ENCODE measurements at regions of chr12 and their contacts with region 1.

Region 1: GRCh38 chr12:85920324-85920947 is 46.3 kb downstream of the NTS start:
- DNase-seq: peak; percentile 53
- H3K4me3 ChIP-seq: no peak overlapping the region
- H3K27ac ChIP-seq: no peak overlapping the region
- H3K4me1 ChIP-seq: no peaks in the 10 kb centered on the region
- H3K27me3 ChIP-seq: no peaks in the 10 kb centered on the region
- CTCF ChIP-seq: peak; percentile 20 to 27
- POLR2A ChIP-seq: no peak

Region 2: DNA sequence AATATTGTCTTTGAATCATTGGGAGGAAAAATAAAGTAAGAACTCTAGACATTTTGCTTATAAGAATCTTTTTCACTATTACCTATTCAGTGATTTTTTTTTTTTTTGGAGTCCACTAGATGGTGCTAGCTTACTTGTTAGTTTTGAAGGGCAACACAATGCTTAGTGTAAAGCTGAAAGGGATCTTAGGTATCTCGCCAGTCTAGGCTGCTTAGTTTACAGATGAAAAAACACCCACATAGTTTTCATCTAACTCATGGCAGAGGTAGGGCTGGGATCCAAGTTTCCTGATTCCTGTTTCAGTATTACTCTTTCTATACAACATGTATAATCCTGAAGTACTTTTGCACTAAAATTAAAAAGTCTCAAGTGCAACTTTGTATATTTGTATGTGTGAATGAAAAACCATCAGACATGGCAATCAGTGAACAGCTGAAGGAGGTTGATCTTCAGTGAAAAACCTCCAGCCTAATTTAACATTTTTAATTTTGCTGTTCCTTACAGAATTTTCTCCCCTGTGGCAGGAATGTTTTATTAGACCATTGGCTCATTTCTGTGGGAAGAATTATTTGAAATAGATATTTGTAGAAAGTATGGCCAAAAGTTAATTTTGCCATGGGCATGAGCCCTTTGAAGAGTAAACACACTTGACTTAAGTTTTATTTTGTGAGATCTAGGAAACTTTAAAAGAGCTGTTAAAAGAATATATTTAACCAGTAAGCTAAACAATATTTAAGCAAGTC is 843.6 kb before region 1 on chr12:
- CTCF ChIA-PET with region 1: interaction called, 25 read pairs
- POLR2A ChIA-PET with region 1: no interaction called
- dilution Hi-C with region 1: no loop called
- intact Hi-C with region 1: loop called (anchors 1 kb)
- DNase-seq: peak; percentile 87
- H3K4me3 ChIP-seq: no peak overlapping the region
- H3K27ac ChIP-seq: no peak overlapping the region
- H3K4me1 ChIP-seq: no peaks in the 10 kb centered on the region
- H3K27me3 ChIP-seq: no peaks in the 10 kb centered on the region
- CTCF ChIP-seq: peak; percentile 27 to 33
- POLR2A ChIP-seq: no peak

Region 3: GRCh38 chr12:85301051-85301450 is 619.4 kb before region 1 on chr12:
- CTCF ChIA-PET with region 1: no interaction called
- POLR2A ChIA-PET with region 1: no interaction called
- dilution Hi-C with region 1: no loop called
- intact Hi-C with region 1: loop called (anchors 10 kb)
- DNase-seq: no peak
- H3K4me3 ChIP-seq: no peak overlapping the region
- H3K27ac ChIP-seq: no peak overlapping the region
- H3K4me1 ChIP-seq: no peaks in the 10 kb centered on the region
- H3K27me3 ChIP-seq: no peaks in the 10 kb centered on the region
- CTCF ChIP-seq: no peak
- POLR2A ChIP-seq: no peak

Region 4: GRCh38 chr12:85468356-85469157 is 451.9 kb before region 1 on chr12:
- CTCF ChIA-PET with region 1: interaction called, 172 read pairs
- POLR2A ChIA-PET with region 1: no interaction called
- dilution Hi-C with region 1: no loop called
- intact Hi-C with region 1: loop called (anchors 1 kb)
- DNase-seq: peak; percentile 80
- H3K4me3 ChIP-seq: peak overlapping the region in 2 of 3 experiments; percentile 41 to 67
- H3K27ac ChIP-seq: no peak overlapping the region
- H3K4me1 ChIP-seq: no peaks in the 10 kb centered on the region
- H3K27me3 ChIP-seq: peaks cover 0 to 2% of the 10 kb centered on the region in 2 experiments
- CTCF ChIP-seq: peak; percentile 64 to 69
- POLR2A ChIP-seq: no peak

Region 5: DNA sequence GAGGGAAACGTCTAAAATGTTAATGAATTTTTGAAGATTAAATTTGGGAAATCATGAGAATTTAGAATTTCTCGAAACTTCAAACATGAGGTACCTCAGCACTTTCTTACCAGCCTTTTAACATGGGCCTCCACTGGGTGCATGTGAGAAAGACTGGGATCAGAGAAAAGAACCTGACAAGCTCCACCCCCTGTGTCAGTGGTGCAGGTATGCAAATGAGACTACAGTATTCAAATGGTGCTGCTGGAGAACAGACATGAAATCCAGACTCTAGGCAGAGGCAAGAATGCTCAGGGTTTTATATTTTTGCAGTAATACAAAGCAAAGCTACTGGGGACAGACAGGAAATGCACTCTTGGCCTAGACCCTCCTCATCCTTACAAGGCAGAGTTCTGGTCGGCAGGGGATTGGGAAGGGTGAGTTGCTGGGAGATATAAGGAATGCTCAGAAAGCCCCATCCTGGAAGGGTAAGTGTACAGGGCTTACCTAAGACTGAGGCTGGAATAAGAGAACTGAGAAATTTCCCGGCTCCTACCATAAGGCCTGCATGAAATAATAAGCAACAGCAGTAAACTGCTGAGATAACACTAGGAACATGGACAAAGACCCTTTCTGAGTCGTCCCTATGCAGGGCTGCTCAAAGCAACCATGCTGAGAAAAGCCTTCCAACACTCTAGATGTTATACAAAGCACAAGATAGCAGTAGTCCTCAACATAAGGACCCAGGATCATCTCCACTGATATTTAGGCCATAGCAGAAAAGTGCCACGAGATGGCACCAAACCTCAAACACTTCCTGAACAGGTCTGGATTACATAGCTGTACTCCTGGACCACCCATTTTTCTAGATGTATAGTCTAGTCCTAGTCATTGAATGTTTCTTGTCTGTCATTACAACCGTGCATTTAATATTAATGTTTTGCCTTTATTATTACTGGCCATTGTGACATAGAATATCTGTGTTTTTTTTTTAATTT is 345.0 kb before region 1 on chr12:
- CTCF ChIA-PET with region 1: interaction called, 21 read pairs
- POLR2A ChIA-PET with region 1: no interaction called
- dilution Hi-C with region 1: no loop called
- intact Hi-C with region 1: loop called (anchors 2 kb)
- DNase-seq: peak; percentile 80
- H3K4me3 ChIP-seq: no peak overlapping the region
- H3K27ac ChIP-seq: no peak overlapping the region
- H3K4me1 ChIP-seq: peaks cover 3% of the 10 kb centered on the region
- H3K27me3 ChIP-seq: no peaks in the 10 kb centered on the region
- CTCF ChIP-seq: peak; percentile 62 to 66
- POLR2A ChIP-seq: no peak

Region 6: DNA sequence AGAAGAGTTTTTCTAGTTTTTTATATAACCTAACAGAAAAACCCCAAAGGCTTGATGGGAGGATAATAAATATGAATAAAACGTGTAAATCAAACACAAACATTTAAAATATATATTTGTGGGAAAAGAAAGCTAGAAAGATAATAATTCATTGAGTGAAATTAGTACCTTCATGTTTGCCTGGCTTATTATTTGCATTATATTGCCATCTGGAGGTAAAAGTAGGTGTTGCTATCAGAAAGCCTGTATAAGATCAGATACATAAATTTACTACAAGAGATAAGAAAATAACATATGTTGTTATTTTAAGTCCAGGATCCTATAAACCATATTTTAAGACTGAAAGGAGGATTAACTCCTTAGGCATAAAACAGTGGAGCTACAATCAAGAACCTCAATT is 31.4 kb after region 1 on chr12:
- CTCF ChIA-PET with region 1: interaction called, 100 read pairs
- POLR2A ChIA-PET with region 1: no interaction called
- dilution Hi-C with region 1: no loop called
- intact Hi-C with region 1: loop called (anchors 1 kb)
- DNase-seq: peak; percentile 55
- H3K4me3 ChIP-seq: no peak overlapping the region
- H3K27ac ChIP-seq: no peak overlapping the region
- H3K4me1 ChIP-seq: peaks cover 4% of the 10 kb centered on the region
- H3K27me3 ChIP-seq: no peaks in the 10 kb centered on the region
- CTCF ChIP-seq: peak; percentile 17 to 25
- POLR2A ChIP-seq: no peak

Region 7: DNA sequence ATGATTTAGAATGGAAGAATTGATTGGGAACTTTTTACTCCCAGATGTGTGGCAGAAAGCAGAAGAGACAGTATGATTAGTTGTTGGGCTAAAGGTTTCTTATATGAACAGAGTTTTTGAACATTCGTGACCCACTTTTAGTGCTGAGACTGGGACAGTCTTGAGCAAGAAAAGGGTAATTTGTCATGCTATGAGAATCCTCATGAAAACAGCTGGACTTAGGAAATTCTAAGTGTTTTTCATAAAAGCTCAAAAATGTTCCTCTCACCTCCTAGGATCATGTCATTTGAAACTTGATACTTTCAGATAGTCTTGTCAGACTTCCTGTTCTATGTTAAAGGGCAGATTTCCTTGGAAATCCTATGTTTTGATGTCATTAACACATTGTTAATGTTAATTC is 249.6 kb after region 1 on chr12:
- CTCF ChIA-PET with region 1: no interaction called
- POLR2A ChIA-PET with region 1: no interaction called
- dilution Hi-C with region 1: no loop called
- intact Hi-C with region 1: no loop called
- DNase-seq: no peak
- H3K4me3 ChIP-seq: no peak overlapping the region
- H3K27ac ChIP-seq: no peak overlapping the region
- H3K4me1 ChIP-seq: no peaks in the 10 kb centered on the region
- H3K27me3 ChIP-seq: no peaks in the 10 kb centered on the region
- CTCF ChIP-seq: no peak
- POLR2A ChIP-seq: no peak

Region 8: GRCh38 chr12:86914716-86915115 is 994.3 kb after region 1 on chr12:
- CTCF ChIA-PET with region 1: interaction called, 37 read pairs
- POLR2A ChIA-PET with region 1: no interaction called
- dilution Hi-C with region 1: no loop called
- intact Hi-C with region 1: loop called (anchors 1 kb)
- DNase-seq: peak; percentile 69
- H3K4me3 ChIP-seq: no peak overlapping the region
- H3K27ac ChIP-seq: no peak overlapping the region
- H3K4me1 ChIP-seq: no peaks in the 10 kb centered on the region
- H3K27me3 ChIP-seq: no peaks in the 10 kb centered on the region
- CTCF ChIP-seq: peak; percentile 34 to 56
- POLR2A ChIP-seq: no peak

Measured in endothelial cell of umbilical vein (primary cell).